ENCODE measurements at regions of chr20 and their contacts with region 1.

Region 1: GRCh38 chr20:47379433-47380150 is 23.1 kb upstream of the ZMYND8 start:
- DNase-seq: no peak
- H3K4me3 ChIP-seq: no peak overlapping the region
- H3K27ac ChIP-seq: no peak overlapping the region
- H3K4me1 ChIP-seq: peaks cover 3% of the 10 kb centered on the region
- H3K27me3 ChIP-seq: no peaks in the 10 kb centered on the region
- CTCF ChIP-seq: no peak

Region 2: GRCh38 chr20:46998477-46999240 is 380.9 kb before region 1 on chr20:
- CTCF ChIA-PET with region 1: no interaction called
- POLR2A ChIA-PET with region 1: interaction called, 12 read pairs
- intact Hi-C with region 1: no loop called
- DNase-seq: no peak
- H3K4me3 ChIP-seq: no peak overlapping the region
- H3K27ac ChIP-seq: no peak overlapping the region
- H3K4me1 ChIP-seq: no peaks in the 10 kb centered on the region
- H3K27me3 ChIP-seq: peaks cover 10% of the 10 kb centered on the region
- CTCF ChIP-seq: no peak

Region 3: DNA sequence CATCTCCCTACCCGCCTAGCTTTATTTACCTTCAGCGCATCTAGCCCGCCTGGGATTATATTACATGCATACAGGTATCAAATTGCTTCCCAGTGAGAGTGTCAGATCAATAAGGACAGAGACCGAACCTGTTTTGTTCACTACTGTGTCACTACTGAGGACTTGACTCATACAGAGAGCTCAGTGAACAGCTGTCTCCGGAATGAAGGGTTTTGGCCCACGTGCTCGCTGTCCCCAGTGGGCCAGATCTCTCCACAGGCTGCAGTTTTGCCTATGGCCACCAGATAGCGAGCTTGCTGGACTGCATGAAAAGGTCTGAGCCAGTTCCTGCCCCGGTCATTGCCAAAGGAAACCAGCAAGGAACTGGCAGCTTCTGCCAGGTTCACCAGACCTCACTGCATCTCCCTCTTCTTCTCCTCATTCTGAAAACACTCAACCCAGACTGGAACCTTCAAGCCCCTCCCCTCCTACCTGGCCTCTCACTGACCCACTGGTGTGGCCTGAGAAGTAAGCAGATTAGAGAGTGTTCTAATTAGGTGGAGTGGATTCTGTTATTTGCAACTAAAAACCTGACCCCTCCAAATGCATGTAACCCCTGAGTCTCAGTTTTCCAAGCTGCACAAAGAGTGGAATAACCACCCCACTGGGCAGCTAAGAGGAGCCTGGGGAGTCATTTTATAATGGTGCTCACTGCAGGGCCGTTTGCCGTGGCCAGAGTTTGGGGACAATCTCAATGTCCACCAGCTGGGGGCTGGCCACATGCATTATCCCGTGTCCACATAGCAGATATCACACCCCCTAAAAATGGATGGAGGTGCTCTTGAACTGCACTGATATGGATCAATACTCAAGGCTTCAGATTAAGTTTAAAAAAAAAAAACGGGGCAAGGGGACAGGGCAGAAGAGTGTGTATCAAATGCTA is 173.8 kb before region 1 on chr20:
- CTCF ChIA-PET with region 1: interaction called, 18 read pairs
- POLR2A ChIA-PET with region 1: no interaction called
- intact Hi-C with region 1: no loop called
- DNase-seq: peak; percentile 71
- H3K4me3 ChIP-seq: no peak overlapping the region
- H3K27ac ChIP-seq: no peak overlapping the region
- H3K4me1 ChIP-seq: no peaks in the 10 kb centered on the region
- H3K27me3 ChIP-seq: no peaks in the 10 kb centered on the region
- CTCF ChIP-seq: peak; percentile 80

Region 4: GRCh38 chr20:47241345-47241781 is 138.2 kb before region 1 on chr20:
- CTCF ChIA-PET with region 1: interaction called, 10 read pairs
- POLR2A ChIA-PET with region 1: no interaction called
- intact Hi-C with region 1: no loop called
- DNase-seq: no peak
- H3K4me3 ChIP-seq: no peak overlapping the region
- H3K27ac ChIP-seq: no peak overlapping the region
- H3K4me1 ChIP-seq: no peaks in the 10 kb centered on the region
- H3K27me3 ChIP-seq: no peaks in the 10 kb centered on the region
- CTCF ChIP-seq: no peak

Region 5: GRCh38 chr20:47317127-47317895 is 62.3 kb before region 1 on chr20:
- CTCF ChIA-PET with region 1: interaction called, 5 read pairs
- POLR2A ChIA-PET with region 1: interaction called, 11 read pairs
- intact Hi-C with region 1: no loop called
- DNase-seq: peak; percentile 90
- H3K4me3 ChIP-seq: no peak overlapping the region
- H3K27ac ChIP-seq: peak overlapping the region; percentile 87
- H3K4me1 ChIP-seq: peaks cover 54% of the 10 kb centered on the region
- H3K27me3 ChIP-seq: no peaks in the 10 kb centered on the region
- CTCF ChIP-seq: no peak